WTC11 (cell line): ENCODE measurements at regions of chr19 and their contacts with region 1.

Region 1: DNA sequence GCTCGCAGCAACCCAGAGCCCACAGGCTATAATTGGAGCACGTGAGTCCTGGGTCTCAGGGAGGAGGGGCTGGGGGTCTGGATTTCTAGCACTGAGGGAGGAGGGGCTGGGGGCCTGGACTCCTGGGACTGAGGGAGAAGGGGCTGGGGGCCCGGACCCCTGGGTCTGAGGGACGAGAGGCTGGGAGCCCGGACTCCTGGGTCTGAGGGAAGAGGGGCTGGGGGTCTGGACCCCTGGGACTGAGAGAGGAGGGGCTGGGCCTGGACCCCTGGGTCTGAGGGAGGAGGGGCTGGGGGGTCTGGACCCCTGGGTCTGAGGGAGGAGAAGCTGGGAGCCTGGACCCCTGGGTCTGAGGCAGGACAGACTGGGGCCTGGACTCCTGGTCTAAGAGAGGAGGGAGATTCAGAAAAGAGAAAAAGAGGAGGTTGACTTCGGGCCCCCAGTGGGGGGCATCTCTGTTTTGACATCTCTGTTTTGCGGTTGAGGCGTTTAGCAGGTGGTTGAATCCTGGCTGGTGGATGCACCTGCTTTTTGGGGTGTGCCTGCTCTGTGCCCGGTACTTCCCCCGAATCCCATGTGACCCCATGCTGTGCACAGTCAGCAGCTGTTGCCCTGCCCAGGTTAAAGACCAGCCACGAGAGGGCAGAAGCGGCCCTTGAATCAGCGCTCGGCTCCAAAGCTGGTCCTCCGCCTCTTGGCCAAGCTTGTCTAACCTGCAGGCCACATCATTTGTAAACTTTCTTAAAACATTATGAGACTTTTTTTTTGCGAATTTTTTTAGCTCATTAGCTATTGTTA is 10.5 kb downstream of the PVR start:
- DNase-seq: peak; percentile 83
- ATAC-seq: peak; percentile 47
- H3K4me3 Mint-ChIP-seq: no peak overlapping the region
- H3K27ac Mint-ChIP-seq: no peak overlapping the region
- H3K4me1 Mint-ChIP-seq: no peaks in the 10 kb centered on the region
- H3K27me3 Mint-ChIP-seq: no peaks in the 10 kb centered on the region
- CTCF ChIP-seq: no peak

Region 2: GRCh38 chr19:44576843-44577565 is 77.2 kb before region 1 on chr19:
- CTCF ChIA-PET with region 1: interaction called, 50 read pairs
- POLR2A ChIA-PET with region 1: no interaction called
- DNase-seq: peak; percentile 64
- ATAC-seq: peak; percentile 94
- H3K4me3 Mint-ChIP-seq: no peak overlapping the region
- H3K27ac Mint-ChIP-seq: no peak overlapping the region
- H3K4me1 Mint-ChIP-seq: peaks cover 16% of the 10 kb centered on the region
- H3K27me3 Mint-ChIP-seq: peaks cover 3% of the 10 kb centered on the region
- CTCF ChIP-seq: peak; percentile 28

Region 3: DNA sequence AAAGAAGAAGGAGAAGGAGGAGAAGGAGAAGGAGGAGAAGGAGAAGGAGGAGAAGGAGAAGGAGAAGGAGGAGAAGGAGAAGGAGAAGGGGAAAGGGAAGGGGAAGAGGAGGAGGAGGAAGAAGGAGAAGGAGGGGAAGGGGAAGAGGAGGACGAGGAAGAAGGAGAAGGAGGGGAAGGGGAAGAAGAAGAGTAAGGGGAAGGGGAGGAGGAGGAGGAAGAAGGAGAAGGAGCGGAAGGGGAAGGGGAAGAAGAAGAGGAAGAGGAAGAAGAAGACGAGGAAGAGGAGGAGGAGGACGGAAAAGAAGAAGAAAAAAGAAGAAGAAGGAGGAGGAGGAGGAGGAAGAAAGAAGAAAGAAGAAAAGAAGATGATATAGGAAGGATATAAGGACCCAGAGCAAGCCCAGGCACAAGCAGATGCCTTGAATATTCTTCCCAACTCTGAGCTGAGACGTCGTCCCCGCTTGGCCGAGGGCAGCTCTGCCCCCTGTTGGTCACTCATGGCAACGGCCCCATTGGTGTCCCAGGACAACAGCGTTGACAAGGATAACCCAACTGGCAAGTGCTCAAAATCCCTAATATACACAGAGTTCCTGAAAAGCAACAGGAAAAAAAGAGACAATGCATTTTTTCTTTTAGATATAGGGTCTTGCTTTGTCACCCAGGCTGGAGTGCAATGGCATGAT is 71.5 kb before region 1 on chr19:
- CTCF ChIA-PET with region 1: interaction called, 38 read pairs
- POLR2A ChIA-PET with region 1: no interaction called
- DNase-seq: peak; percentile 86
- ATAC-seq: peak; percentile 93
- H3K4me3 Mint-ChIP-seq: no peak overlapping the region
- H3K27ac Mint-ChIP-seq: no peak overlapping the region
- H3K4me1 Mint-ChIP-seq: peaks cover 3% of the 10 kb centered on the region
- H3K27me3 Mint-ChIP-seq: peaks cover 15% of the 10 kb centered on the region
- CTCF ChIP-seq: peak; percentile 85

Region 4: GRCh38 chr19:44643605-44644401 is 10.4 kb before region 1 on chr19 and contains the start of gene PVR:
- CTCF ChIA-PET with region 1: interaction called, 13 read pairs
- POLR2A ChIA-PET with region 1: no interaction called
- DNase-seq: peak; percentile 61
- ATAC-seq: peak; percentile 82
- H3K4me3 Mint-ChIP-seq: peak within 1 kb of the TSS; percentile 87
- H3K27ac Mint-ChIP-seq: no peak within 1 kb of the TSS
- H3K4me1 Mint-ChIP-seq: no peaks in the 10 kb centered on the region
- H3K27me3 Mint-ChIP-seq: peaks cover 24% of the 10 kb centered on the region
- CTCF ChIP-seq: no peak
- total RNA-seq, gene PVR: 13.7 to 15.9 TPM (median 15.0 TPM) in 3 replicates

Region 5: GRCh38 chr19:44708940-44709339 is 54.8 kb after region 1 on chr19:
- CTCF ChIA-PET with region 1: no interaction called
- POLR2A ChIA-PET with region 1: no interaction called
- DNase-seq: no peak
- ATAC-seq: no peak
- H3K4me3 Mint-ChIP-seq: no peak overlapping the region
- H3K27ac Mint-ChIP-seq: no peak overlapping the region
- H3K4me1 Mint-ChIP-seq: no peaks in the 10 kb centered on the region
- H3K27me3 Mint-ChIP-seq: no peaks in the 10 kb centered on the region
- CTCF ChIP-seq: no peak